ENCODE measurements at regions of chr2 and their contacts with region 1.

Region 1: DNA sequence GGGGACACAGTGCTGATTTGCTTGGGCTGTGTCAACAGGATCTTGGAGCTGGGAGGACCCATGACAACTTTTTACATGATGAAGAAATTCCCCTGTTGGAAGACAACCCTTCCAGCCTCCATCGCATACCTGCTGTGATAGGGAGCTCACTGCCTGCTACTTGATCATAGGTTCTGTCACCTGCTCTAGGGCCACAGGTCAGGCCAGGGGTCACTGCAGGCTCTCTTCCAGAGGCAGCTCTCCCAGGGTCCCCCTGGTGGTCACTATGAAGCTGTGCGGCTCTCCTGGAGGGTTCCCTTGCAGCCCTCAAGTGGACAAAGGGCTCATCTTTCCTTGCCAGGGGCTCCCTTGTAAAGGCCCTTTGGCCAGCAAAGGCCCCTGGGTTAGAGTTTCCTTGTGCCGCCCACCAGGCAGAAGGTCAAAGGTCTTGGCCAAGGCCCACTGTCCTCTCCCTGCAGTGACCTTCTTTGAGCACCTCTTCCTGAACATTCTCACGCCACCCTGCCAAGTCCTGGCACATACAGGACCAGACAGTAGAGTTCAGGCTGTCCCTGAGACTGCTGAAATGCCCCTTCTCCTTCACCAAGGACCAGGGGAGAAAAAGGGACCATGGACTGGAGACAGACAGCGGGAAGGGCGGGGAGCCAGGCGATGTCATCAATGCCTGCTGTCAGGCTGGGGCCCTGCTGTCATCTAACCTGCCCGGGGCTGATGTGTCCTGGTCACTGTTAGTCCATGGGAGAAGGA is 345.1 kb downstream of the DYSF start:
- DNase-seq: peak; percentile 39
- H3K4me3 ChIP-seq: no peak overlapping the region
- H3K27ac ChIP-seq: no peak overlapping the region
- H3K4me1 ChIP-seq: no peaks in the 10 kb centered on the region
- H3K27me3 ChIP-seq: peaks cover 4 to 6% of the 10 kb centered on the region in 2 experiments
- CTCF ChIP-seq: peak; percentile 78 to 88
- POLR2A ChIP-seq: no peak

Region 2: GRCh38 chr2:71545572-71546274 is 252.7 kb before region 1 on chr2:
- CTCF ChIA-PET with region 1: interaction called, 33 read pairs
- POLR2A ChIA-PET with region 1: no interaction called
- dilution Hi-C with region 1: no loop called
- intact Hi-C with region 1: loop called (anchors 1 kb)
- DNase-seq: peak; percentile 74
- H3K4me3 ChIP-seq: peak overlapping the region in 1 of 3 experiments; percentile 7
- H3K27ac ChIP-seq: no peak overlapping the region
- H3K4me1 ChIP-seq: peaks cover 11% of the 10 kb centered on the region
- H3K27me3 ChIP-seq: no peaks in the 10 kb centered on the region
- CTCF ChIP-seq: peak; percentile 64 to 72
- POLR2A ChIP-seq: no peak

Region 3: DNA sequence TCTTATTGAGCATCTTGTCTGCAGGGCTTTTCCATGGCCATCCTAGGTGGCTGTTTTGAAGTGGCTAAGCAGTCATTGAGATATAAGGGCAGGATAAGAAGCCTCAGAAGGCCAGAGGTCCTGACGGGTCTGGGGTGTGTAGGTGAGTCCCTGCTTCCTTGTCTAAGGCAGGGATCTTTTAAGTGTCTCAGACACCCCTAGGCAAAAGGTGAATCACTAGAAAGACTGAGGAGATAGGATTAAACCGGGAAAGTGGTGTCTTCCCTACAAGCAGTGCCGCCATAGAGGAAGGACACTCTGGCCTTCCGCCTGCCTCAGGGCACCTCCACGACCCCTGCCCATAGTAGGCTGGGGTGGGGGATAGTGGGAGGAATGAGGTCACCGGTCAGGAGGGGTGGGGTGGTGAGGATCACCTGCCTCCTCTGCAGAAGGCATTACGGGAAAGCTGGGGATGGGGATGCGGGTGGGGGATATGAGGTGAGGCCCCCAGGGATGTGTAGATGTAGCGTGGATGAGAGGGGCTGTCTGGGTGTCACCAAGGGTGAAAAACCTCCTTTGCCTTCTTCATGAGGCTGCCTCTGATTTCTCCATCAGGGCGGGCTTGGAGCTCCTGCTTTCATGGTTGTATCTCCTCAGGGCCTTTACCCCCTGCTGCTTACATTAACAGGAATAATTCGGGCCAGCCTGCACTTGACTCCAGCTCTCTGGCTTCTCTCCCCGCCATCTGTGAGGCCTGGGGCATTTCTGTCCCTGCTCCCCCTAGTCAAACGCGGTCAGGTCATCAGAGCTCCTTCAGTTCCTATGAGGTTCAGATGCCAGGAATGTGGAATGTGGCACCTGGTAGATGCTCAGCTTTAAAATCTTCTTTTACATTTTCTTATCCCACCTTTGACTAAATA is 101.1 kb before region 1 on chr2:
- CTCF ChIA-PET with region 1: interaction called, 22 read pairs
- POLR2A ChIA-PET with region 1: no interaction called
- dilution Hi-C with region 1: no loop called
- intact Hi-C with region 1: no loop called
- DNase-seq: no peak
- H3K4me3 ChIP-seq: no peak overlapping the region
- H3K27ac ChIP-seq: no peak overlapping the region
- H3K4me1 ChIP-seq: no peaks in the 10 kb centered on the region
- H3K27me3 ChIP-seq: no peaks in the 10 kb centered on the region
- CTCF ChIP-seq: no peak
- POLR2A ChIP-seq: no peak

Region 4: DNA sequence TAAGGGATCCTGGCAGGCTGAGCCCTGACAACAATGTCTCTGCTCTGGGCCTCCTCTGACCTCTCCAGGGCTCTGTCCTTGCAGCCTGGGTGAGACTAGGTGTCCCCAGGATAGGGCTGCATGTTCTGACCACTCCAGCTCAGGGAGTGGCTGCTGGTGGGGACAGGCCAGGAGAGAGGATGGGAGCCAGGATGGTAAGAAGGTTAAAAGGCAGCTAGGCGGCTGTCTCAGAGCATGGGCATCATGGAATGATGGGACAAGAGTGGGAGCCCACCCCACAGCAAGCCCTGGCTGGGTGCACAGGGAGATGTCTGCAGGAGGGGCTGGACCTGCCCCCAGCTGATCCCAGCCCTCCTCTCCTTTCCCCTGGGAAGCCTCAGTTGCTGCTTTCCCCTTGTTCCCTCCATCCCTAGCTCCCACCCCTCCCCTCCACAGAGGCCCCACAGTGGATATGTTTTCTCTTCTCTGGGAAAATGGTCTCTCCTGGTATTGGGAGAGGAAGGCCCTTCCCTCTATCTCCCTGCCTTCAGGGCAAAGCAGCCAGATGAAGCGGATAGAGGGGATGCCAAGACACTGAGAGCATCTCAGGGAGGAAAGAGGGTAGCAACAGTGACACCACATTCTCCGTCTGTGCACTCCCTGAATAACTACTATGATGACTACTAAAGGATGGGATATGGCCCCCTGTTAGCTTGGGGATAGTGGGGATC is 10.8 kb before region 1 on chr2:
- CTCF ChIA-PET with region 1: interaction called, 33 read pairs
- POLR2A ChIA-PET with region 1: no interaction called
- dilution Hi-C with region 1: no loop called
- intact Hi-C with region 1: no loop called
- DNase-seq: no peak
- H3K4me3 ChIP-seq: no peak overlapping the region
- H3K27ac ChIP-seq: no peak overlapping the region
- H3K4me1 ChIP-seq: no peaks in the 10 kb centered on the region
- H3K27me3 ChIP-seq: peaks cover 0 to 2% of the 10 kb centered on the region in 2 experiments
- CTCF ChIP-seq: no peak
- POLR2A ChIP-seq: no peak

Region 5: GRCh38 chr2:71995067-71995665 is 196.7 kb after region 1 on chr2:
- CTCF ChIA-PET with region 1: interaction called, 14 read pairs
- POLR2A ChIA-PET with region 1: no interaction called
- dilution Hi-C with region 1: no loop called
- intact Hi-C with region 1: loop called (anchors 5 kb)
- DNase-seq: no peak
- H3K4me3 ChIP-seq: no peak overlapping the region
- H3K27ac ChIP-seq: no peak overlapping the region
- H3K4me1 ChIP-seq: no peaks in the 10 kb centered on the region
- H3K27me3 ChIP-seq: peaks cover 8 to 24% of the 10 kb centered on the region in 2 experiments
- CTCF ChIP-seq: peak in 1 of 2 donors; percentile 11
- POLR2A ChIP-seq: no peak

Region 6: GRCh38 chr2:72579591-72580180 is 781.2 kb after region 1 on chr2:
- CTCF ChIA-PET with region 1: interaction called, 13 read pairs
- POLR2A ChIA-PET with region 1: no interaction called
- dilution Hi-C with region 1: no loop called
- intact Hi-C with region 1: loop called (anchors 2 kb)
- DNase-seq: peak; percentile 69
- H3K4me3 ChIP-seq: no peak overlapping the region
- H3K27ac ChIP-seq: no peak overlapping the region
- H3K4me1 ChIP-seq: no peaks in the 10 kb centered on the region
- H3K27me3 ChIP-seq: no peaks in the 10 kb centered on the region
- CTCF ChIP-seq: peak; percentile 36 to 44
- POLR2A ChIP-seq: no peak

Measured in endothelial cell of umbilical vein (primary cell).